HEK293 (cell line): ENCODE measurements at regions of chr10 and their contacts with region 1.

Region 1: GRCh38 chr10:52779541-52780390 is 7.2 kb upstream of the MBL2 start:
- H3K4me3 ChIP-seq: no peak overlapping the region
- H3K27ac ChIP-seq: no peak overlapping the region
- H3K4me1 ChIP-seq: no peaks in the 10 kb centered on the region
- CTCF ChIP-seq: peak; percentile 73

Region 2: GRCh38 chr10:52644373-52645186 is 135.2 kb before region 1 on chr10:
- CTCF ChIA-PET with region 1: interaction called, 73 read pairs
- POLR2A ChIA-PET with region 1: no interaction called
- H3K4me3 ChIP-seq: no peak overlapping the region
- H3K27ac ChIP-seq: no peak overlapping the region
- H3K4me1 ChIP-seq: no peaks in the 10 kb centered on the region
- CTCF ChIP-seq: peak; percentile 74

Region 3: DNA sequence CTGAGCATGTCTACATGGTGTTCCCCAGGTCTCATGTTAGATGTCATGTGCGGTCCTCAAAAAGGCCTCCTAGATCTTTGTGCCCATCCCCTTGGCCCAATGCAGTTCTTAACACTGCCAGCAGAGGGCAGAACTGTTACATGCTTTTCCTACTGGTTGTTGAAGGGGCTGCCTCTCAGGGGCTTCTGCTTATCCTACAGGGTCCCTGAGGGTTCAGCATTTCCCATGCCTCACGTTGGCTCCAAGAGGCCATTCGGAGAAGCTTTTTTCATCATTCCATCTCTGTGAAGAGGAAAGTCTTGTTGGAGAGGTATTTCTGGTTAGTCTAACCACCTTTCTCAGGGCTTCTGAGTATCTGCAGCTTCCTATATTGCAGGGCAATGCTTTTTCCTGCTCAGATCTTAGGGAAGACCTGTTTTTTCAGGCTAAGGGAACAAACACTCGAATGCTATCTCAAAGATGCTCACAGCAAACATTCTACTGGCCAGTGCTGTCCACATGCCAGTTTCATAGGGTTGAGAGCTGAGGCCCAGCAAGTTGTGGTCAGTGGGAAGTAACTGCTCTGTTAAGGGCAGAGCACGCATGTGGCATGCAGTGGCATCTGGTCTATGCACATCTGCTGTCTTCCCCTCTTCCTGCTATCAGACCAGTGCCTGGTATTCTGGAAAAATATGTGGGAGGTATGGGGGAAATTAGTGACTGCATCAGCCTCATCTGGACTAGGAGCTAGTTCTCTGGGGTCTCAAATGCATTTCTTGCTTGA is 38.7 kb before region 1 on chr10:
- CTCF ChIA-PET with region 1: interaction called, 67 read pairs
- POLR2A ChIA-PET with region 1: no interaction called
- H3K4me3 ChIP-seq: no peak overlapping the region
- H3K27ac ChIP-seq: no peak overlapping the region
- H3K4me1 ChIP-seq: no peaks in the 10 kb centered on the region
- CTCF ChIP-seq: no peak

Region 4: GRCh38 chr10:52746169-52746568 is 33.6 kb before region 1 on chr10:
- CTCF ChIA-PET with region 1: interaction called, 67 read pairs
- POLR2A ChIA-PET with region 1: no interaction called
- H3K4me3 ChIP-seq: no peak overlapping the region
- H3K27ac ChIP-seq: no peak overlapping the region
- H3K4me1 ChIP-seq: no peaks in the 10 kb centered on the region
- CTCF ChIP-seq: no peak

Region 5: DNA sequence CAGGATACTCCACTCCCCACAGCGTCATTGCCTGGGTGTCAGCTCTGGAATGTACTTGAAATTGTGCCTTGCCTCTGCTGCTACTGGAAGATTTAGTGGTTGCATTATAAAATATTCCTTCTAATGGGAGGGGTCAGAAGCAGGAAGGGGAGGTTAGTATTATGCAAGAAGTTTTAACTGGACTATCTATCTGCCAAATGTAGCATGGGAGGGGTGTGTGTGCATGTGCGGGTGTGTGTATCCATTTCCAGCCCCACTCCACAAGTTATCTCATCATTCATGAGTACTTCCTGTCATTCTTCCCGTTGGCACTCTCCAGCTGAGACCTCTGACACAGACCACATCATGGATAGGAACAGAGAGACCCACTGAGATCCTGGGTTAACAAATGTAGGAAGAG is 20.6 kb before region 1 on chr10:
- CTCF ChIA-PET with region 1: interaction called, 20 read pairs
- POLR2A ChIA-PET with region 1: no interaction called
- H3K4me3 ChIP-seq: no peak overlapping the region
- H3K27ac ChIP-seq: no peak overlapping the region
- H3K4me1 ChIP-seq: no peaks in the 10 kb centered on the region
- CTCF ChIP-seq: no peak

Region 6: DNA sequence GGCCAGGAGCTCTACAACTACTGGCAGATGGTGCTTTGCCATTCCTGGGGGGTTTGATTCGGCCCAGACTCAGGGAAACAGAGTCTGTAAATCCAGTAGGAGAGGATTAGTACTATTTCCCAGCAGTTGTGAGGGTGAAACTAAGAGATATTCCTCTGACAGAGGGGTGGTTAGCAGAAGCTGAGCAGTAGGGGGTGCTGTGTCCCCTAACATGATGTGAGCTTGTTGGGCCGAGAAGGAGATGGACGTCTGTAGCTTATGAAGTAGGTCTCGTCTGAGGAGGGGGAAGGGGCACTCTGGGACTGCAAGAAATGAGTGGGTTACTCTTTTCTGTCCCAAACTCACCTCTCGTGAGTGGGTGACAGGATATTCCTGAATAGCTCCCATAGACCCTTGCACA is 172.1 kb after region 1 on chr10:
- CTCF ChIA-PET with region 1: no interaction called
- POLR2A ChIA-PET with region 1: no interaction called
- H3K4me3 ChIP-seq: no peak overlapping the region
- H3K27ac ChIP-seq: no peak overlapping the region
- H3K4me1 ChIP-seq: no peaks in the 10 kb centered on the region
- CTCF ChIP-seq: no peak